GM12878 (cell line): ENCODE measurements at regions of chr2 and their contacts with region 1.

Region 1: GRCh38 chr2:197168705-197169104 is 141.9 kb downstream of the ANKRD44 start:
- DNase-seq: no peak
- ATAC-seq: peak; percentile 99
- H3K4me3 ChIP-seq: no peak overlapping the region
- H3K27ac ChIP-seq: no peak overlapping the region
- H3K4me1 ChIP-seq: peaks cover 10% of the 10 kb centered on the region
- H3K27me3 ChIP-seq: no peaks in the 10 kb centered on the region
- CTCF ChIP-seq: peak; percentile 68 to 76 (median 74)
- EP300 ChIP-seq: no peak
- POLR2A ChIP-seq: no peak
- RAD21 ChIP-seq: peak; percentile 82

Region 2: GRCh38 chr2:197086500-197086899 is 82.2 kb before region 1 on chr2:
- CTCF ChIA-PET with region 1: interaction called, 13 read pairs
- POLR2A ChIA-PET with region 1: no interaction called
- RAD21 ChIA-PET with region 1: no interaction called
- SMC1A ChIA-PET with region 1: interaction called, 4 read pairs
- in situ Hi-C with region 1: no loop called
- intact Hi-C with region 1: no loop called
- DNase-seq: no peak
- ATAC-seq: peak; percentile 81
- H3K4me3 ChIP-seq: no peak overlapping the region
- H3K27ac ChIP-seq: no peak overlapping the region
- H3K4me1 ChIP-seq: no peaks in the 10 kb centered on the region
- H3K27me3 ChIP-seq: no peaks in the 10 kb centered on the region
- CTCF ChIP-seq: no peak
- EP300 ChIP-seq: no peak
- POLR2A ChIP-seq: no peak
- RAD21 ChIP-seq: no peak

Region 3: GRCh38 chr2:197137231-197137630 is 31.5 kb before region 1 on chr2:
- CTCF ChIA-PET with region 1: interaction called, 63 read pairs
- POLR2A ChIA-PET with region 1: interaction called, 3 read pairs
- RAD21 ChIA-PET with region 1: interaction called, 5 read pairs
- SMC1A ChIA-PET with region 1: interaction called, 52 read pairs
- in situ Hi-C with region 1: no loop called
- intact Hi-C with region 1: no loop called
- DNase-seq: no peak
- ATAC-seq: no peak
- H3K4me3 ChIP-seq: no peak overlapping the region
- H3K27ac ChIP-seq: no peak overlapping the region
- H3K4me1 ChIP-seq: peaks cover 32% of the 10 kb centered on the region
- H3K27me3 ChIP-seq: no peaks in the 10 kb centered on the region
- CTCF ChIP-seq: no peak
- EP300 ChIP-seq: no peak
- POLR2A ChIP-seq: no peak
- RAD21 ChIP-seq: no peak

Region 4: DNA sequence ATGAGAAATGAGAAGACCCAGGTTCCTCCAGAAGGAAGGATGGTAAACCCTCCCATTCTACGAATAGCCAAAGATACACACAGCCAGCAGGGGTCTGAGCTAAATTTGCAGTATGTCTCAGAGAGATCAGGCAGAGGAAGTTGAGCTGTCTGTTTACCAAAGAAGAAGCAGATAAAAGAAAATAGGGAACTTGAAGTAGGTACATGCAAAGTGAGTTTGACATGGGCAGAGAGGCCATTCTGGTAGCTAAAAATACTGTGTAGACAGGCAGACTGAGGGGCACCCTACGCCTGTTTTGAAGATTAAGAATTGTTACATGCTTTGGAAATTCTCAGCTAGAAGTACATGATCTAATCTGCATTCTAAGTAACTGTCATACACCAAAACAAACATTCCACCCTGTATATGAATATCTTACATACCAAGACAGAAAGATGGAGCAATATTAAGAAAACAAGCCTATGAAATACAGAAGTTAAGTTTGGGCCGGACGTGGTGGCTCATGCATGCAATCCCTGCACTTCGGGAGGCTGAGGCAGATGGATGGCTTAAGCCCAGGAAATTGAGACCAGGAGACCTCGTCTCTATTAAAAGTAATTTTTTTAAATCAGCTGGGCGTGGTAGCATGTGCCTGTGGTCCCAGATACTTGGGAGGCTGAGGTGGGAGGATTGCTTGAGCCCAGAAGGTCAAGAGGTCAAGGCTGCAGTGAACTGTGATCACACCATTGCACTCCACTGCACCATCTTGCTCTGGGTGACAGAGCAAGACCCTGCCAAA is 16.1 kb before region 1 on chr2:
- CTCF ChIA-PET with region 1: interaction called, 49 read pairs
- POLR2A ChIA-PET with region 1: no interaction called
- RAD21 ChIA-PET with region 1: interaction called, 10 read pairs
- SMC1A ChIA-PET with region 1: interaction called, 18 read pairs
- in situ Hi-C with region 1: no loop called
- intact Hi-C with region 1: no loop called
- DNase-seq: peak; percentile 67
- ATAC-seq: peak; percentile 93
- H3K4me3 ChIP-seq: peak overlapping the region; percentile 25; the same call in 1 of the 2 replicates
- H3K27ac ChIP-seq: peak overlapping the region; percentile 48
- H3K4me1 ChIP-seq: peaks cover 34% of the 10 kb centered on the region
- H3K27me3 ChIP-seq: no peaks in the 10 kb centered on the region
- CTCF ChIP-seq: peak in 2 of 3 experiments; percentile 31 to 39; a peak in 2 of 6 replicates
- EP300 ChIP-seq: peak in 1 of 2 experiments; percentile 44; a peak in 1 of 4 replicates
- POLR2A ChIP-seq: no peak
- RAD21 ChIP-seq: no peak; the same call in 1 of the 2 replicates